Transverse colon (tissue), 4 donors: ENCODE measurements at regions of chr6 and their contacts with region 1.

Region 1: DNA sequence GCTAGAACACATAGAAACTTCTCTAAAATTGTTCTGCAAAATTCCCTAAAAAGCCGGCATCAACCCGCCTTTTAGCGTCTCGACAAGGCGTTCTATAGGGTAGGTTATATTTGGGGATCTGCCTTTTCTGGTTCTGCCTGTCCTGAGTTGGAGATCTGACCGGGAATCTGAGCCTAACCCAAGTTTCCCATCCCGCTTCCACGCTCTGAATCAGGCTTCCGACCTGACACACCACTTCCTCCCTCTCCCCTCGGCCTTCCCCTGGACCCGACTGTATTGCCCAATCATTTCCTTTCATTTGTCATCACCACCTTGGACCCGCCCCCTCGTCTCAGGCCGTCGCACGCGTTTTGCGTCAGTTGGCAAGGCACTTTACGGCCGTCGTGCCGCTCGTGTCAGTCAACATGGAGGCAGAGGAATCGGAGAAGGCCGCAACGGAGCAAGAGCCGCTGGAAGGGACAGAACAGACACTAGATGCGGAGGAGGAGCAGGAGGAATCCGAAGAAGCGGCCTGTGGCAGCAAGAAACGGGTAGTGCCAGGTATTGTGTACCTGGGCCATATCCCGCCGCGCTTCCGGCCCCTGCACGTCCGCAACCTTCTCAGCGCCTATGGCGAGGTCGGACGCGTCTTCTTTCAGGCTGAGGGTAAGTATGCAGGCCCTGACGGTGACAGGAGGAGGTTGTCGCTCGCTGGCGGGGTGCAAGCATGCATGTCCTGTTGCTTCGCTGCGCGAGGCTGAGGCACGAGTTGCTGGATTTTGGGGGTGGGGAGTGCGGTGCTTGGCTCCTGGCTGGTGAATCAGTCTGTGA is at the start of gene ABT1:
- DNase-seq: peak; percentile 98
- H3K4me3 ChIP-seq: peak within 1 kb of the TSS; percentile 78 to 96 (median 84)
- H3K27ac ChIP-seq: peak within 1 kb of the TSS; percentile 89 to 92 (median 90)
- H3K4me1 ChIP-seq: peaks cover 6 to 23% (median 8%) of the 10 kb centered on the region in 4 donors
- H3K27me3 ChIP-seq: peaks cover 34% of the 10 kb centered on the region
- CTCF ChIP-seq: no peak
- EP300 ChIP-seq: no peak
- POLR2A ChIP-seq: peak; percentile 88
- total RNA-seq, gene ABT1: 5.6 to 16.5 (median 12.4) TPM

Region 2: DNA sequence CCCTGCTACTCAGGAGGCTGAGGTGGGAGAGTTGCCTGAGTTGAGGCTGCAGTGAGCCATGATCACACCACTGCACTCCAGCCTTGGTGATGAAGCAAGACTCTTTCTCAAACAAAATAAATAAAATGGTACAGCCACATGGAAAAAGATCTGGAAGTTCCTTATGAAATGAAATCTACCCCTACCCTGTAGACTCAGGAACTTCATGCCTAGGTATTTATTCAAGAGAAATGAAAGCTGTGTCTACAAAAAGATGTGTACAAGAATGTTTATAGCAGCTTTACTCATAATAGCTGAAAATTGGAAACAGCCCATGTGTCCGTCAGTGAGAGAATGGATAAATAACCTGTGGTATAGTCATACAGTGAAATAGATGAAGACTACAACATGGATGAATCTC is 1862.6 kb before region 1 on chr6:
- in situ Hi-C with region 1: no loop called
- intact Hi-C with region 1: no loop called
- DNase-seq: no peak
- H3K4me3 ChIP-seq: no peak overlapping the region
- H3K27ac ChIP-seq: no peak overlapping the region
- H3K4me1 ChIP-seq: no peaks in the 10 kb centered on the region
- H3K27me3 ChIP-seq: no peaks in the 10 kb centered on the region
- CTCF ChIP-seq: no peak
- EP300 ChIP-seq: no peak
- POLR2A ChIP-seq: no peak

Region 3: DNA sequence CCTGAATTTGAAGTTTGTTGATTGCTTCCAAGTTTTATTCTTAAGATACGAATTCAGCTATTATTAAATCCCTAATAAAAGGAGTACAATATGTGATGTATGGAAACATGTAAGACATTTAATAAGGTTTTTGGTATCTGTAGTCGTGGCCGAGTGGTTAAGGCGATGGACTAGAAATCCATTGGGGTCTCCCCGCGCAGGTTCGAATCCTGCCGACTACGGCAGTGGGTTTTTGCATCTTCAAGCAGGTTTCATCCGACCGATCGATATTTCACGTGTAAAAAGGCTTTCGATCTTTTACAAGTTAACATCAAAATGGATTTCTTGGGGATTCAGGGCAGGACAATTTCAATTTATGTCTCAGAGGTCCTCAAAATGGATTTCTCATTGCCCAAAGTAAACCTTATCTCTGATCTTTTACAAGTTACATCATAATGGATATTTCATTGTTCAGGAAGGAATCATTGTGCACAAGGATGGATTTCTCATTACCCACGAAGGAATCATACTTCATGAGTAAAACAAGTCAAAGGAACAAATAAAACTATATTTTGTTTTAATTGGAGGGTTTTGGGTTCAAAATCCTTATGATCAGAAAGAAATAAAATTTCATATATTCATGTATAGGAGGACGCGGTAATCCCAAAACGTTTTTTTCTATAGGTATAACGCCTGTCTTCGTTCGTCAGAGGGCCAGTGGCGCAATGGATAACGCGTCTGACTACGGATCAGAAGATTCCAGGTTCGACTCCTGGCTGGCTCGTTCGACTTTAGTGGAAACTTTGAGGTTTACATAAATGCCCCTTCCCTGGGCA is 269.1 kb before region 1 on chr6:
- in situ Hi-C with region 1: loop called in 2 of 4 experiments (anchors 10 kb)
- intact Hi-C with region 1: no loop called
- DNase-seq: peak; percentile 28
- H3K4me3 ChIP-seq: no peak overlapping the region
- H3K27ac ChIP-seq: no peak overlapping the region
- H3K4me1 ChIP-seq: peaks cover 0 to 11% (median 6%) of the 10 kb centered on the region in 4 donors
- H3K27me3 ChIP-seq: peaks cover 76% of the 10 kb centered on the region
- CTCF ChIP-seq: no peak
- EP300 ChIP-seq: no peak
- POLR2A ChIP-seq: no peak

Region 4: GRCh38 chr6:26342106-26343004 is 254.4 kb before region 1 on chr6:
- in situ Hi-C with region 1: loop called in 2 of 4 experiments (anchors 10 kb)
- intact Hi-C with region 1: loop called (anchors 1 kb)
- DNase-seq: no peak
- H3K4me3 ChIP-seq: peak overlapping the region in 1 of 4 donors; percentile 20
- H3K27ac ChIP-seq: peak overlapping the region in 1 of 4 donors; percentile 24
- H3K4me1 ChIP-seq: peaks cover 0 to 7% (median 0%) of the 10 kb centered on the region in 4 donors
- H3K27me3 ChIP-seq: peaks cover 6% of the 10 kb centered on the region
- CTCF ChIP-seq: no peak
- EP300 ChIP-seq: no peak
- POLR2A ChIP-seq: no peak

Region 5: GRCh38 chr6:26354162-26354561 is 242.6 kb before region 1 on chr6:
- in situ Hi-C with region 1: no loop called
- intact Hi-C with region 1: no loop called
- DNase-seq: no peak
- H3K4me3 ChIP-seq: no peak overlapping the region
- H3K27ac ChIP-seq: no peak overlapping the region
- H3K4me1 ChIP-seq: no peaks in the 10 kb centered on the region
- H3K27me3 ChIP-seq: no peaks in the 10 kb centered on the region
- CTCF ChIP-seq: no peak
- EP300 ChIP-seq: no peak
- POLR2A ChIP-seq: no peak

Region 6: DNA sequence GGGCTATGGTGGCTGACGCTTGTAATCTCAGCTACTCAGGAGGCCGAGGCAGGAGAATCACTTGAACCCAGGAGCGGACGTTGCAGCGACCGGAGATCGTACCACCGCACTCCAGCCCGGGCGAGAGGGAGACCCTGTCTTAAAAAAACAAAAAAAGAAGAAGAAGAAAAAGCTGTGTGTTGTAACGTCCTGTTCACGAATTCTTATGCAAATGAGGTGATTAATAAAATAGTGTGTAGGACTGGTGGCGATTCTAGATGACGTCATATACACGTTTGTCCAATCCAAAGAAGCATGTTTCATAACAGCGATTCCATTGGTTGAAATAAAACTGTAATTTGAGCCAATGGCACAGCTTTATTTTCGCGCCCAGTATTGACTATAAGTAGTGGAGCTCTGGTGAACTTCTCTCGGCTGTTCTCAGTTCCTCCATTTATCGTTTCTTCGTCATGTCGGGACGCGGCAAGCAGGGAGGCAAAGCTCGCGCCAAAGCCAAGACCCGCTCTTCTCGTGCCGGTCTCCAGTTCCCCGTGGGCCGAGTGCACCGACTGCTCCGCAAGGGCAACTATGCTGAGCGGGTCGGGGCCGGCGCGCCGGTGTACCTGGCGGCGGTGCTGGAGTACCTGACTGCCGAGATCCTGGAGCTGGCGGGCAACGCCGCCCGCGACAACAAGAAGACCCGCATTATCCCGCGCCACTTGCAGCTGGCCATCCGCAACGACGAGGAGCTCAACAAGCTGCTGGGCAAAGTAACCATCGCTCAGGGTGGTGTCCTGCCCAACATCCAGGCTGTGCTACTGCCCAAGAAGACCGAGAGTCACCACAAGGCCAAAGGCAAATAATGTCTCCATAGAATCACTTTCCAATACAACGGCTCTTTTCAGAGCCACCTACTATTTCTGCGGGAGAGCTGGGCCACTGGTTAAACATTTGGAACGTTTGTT is 1268.4 kb after region 1 on chr6:
- in situ Hi-C with region 1: loop called in 1 of 4 experiments (anchors 25 kb)
- intact Hi-C with region 1: no loop called
- DNase-seq: peak; percentile 67
- H3K4me3 ChIP-seq: peak overlapping the region; percentile 37 to 88 (median 71)
- H3K27ac ChIP-seq: peak overlapping the region; percentile 67 to 90 (median 80)
- H3K4me1 ChIP-seq: peaks cover 7 to 36% (median 25%) of the 10 kb centered on the region in 4 donors
- H3K27me3 ChIP-seq: peaks cover 33% of the 10 kb centered on the region
- CTCF ChIP-seq: peak in 1 of 5 experiments; percentile 1
- EP300 ChIP-seq: no peak
- POLR2A ChIP-seq: peak; percentile 91